SK-N-SH (cell line): ENCODE measurements at regions of chr16 and their contacts with region 1.

Region 1: GRCh38 chr16:70395345-70395901 is 43.5 kb downstream of the ST3GAL2 start:
- DNase-seq: peak; percentile 83
- H3K4me3 ChIP-seq: peak overlapping the region in 1 of 2 experiments; percentile 29; a peak in 1 of 4 replicates
- H3K27ac ChIP-seq: no peak overlapping the region; a peak in 1 of 4 replicates
- H3K4me1 ChIP-seq: peaks cover 0 to 15% of the 10 kb centered on the region in 2 experiments; a peak in 1 of 4 replicates
- H3K27me3 ChIP-seq: no peaks in the 10 kb centered on the region
- CTCF ChIP-seq: peak; percentile 76
- EP300 ChIP-seq: no peak
- RAD21 ChIP-seq: peak; percentile 76

Region 2: GRCh38 chr16:70257391-70257790 is 138.0 kb before region 1 on chr16:
- CTCF ChIA-PET with region 1: no interaction called
- POLR2A ChIA-PET with region 1: no interaction called
- DNase-seq: no peak
- H3K4me3 ChIP-seq: no peak overlapping the region
- H3K27ac ChIP-seq: no peak overlapping the region; a peak in 1 of 4 replicates
- H3K4me1 ChIP-seq: no peaks in the 10 kb centered on the region
- H3K27me3 ChIP-seq: no peaks in the 10 kb centered on the region
- CTCF ChIP-seq: no peak
- EP300 ChIP-seq: no peak
- RAD21 ChIP-seq: no peak

Region 3: DNA sequence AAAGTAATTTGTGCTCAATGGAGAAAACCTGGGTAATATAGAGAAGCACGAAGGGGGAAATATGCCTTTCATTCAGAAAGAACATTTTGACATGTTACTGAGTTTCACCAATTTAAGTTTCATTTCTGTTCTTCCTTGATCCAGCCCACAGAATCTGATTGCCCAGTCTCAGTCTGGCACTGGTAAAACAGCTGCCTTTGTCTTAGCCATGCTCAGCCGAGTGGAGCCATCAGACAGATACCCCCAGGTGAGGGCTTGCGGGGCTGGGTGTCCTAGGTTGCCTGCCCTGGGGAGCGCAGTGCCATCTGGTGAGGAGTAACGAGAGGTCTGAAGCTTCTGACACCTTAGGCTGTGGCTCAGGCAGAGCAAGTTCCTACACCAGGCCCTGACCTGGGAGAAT is 31.0 kb before region 1 on chr16:
- CTCF ChIA-PET with region 1: no interaction called
- POLR2A ChIA-PET with region 1: no interaction called
- DNase-seq: no peak
- H3K4me3 ChIP-seq: no peak overlapping the region
- H3K27ac ChIP-seq: no peak overlapping the region
- H3K4me1 ChIP-seq: no peaks in the 10 kb centered on the region
- H3K27me3 ChIP-seq: no peaks in the 10 kb centered on the region
- CTCF ChIP-seq: no peak
- EP300 ChIP-seq: no peak
- RAD21 ChIP-seq: no peak

Region 4: DNA sequence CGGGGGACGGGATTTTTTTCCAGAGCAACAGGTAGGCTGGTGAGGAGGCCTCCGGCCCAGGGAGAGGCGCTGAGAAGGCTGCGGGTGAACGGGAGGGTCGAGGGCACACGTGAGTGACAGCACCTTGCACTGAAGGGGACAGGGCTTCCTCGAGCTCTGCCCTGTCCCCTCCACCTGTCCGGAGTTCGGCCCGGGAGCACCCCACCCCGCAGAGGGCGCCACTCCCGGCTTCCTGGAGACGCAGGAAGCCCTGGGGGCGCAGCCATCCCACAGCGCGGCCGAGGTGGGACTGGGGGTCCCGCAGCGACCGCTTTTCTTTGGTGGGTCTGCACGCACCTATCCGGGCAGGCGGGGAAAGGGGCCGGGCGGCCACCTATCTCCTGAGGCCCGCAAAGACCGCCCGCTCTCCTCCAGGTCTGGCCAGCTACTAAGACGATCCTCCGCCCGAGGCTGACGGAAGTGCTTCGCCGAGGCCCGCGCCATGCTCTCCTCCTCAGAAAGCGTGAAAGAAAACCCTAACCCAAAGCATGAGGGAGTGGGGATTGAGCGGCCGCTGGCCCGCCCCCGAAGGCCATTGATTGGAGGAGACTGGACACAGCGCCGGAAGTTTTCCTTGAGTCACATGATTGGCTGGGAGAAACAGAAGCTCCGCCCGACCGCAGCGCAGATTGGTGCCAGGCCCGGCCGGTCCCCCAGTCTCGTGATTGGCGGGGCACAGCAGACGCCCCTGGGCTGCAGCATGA is 14.4 kb before region 1 on chr16:
- CTCF ChIA-PET with region 1: interaction called, 7 read pairs
- POLR2A ChIA-PET with region 1: interaction called, 14 read pairs
- DNase-seq: peak; percentile 97
- H3K4me3 ChIP-seq: peak overlapping the region; percentile 65 to 72
- H3K27ac ChIP-seq: peak overlapping the region; percentile 77 to 85
- H3K4me1 ChIP-seq: peaks cover 6 to 8% of the 10 kb centered on the region in 2 experiments; a peak in 2 of 4 replicates
- H3K27me3 ChIP-seq: no peaks in the 10 kb centered on the region
- CTCF ChIP-seq: peak; percentile 49
- EP300 ChIP-seq: no peak
- RAD21 ChIP-seq: no peak